AG04449 (cell line): ENCODE measurements at regions of chr4 and their contacts with region 1.

Region 1: DNA sequence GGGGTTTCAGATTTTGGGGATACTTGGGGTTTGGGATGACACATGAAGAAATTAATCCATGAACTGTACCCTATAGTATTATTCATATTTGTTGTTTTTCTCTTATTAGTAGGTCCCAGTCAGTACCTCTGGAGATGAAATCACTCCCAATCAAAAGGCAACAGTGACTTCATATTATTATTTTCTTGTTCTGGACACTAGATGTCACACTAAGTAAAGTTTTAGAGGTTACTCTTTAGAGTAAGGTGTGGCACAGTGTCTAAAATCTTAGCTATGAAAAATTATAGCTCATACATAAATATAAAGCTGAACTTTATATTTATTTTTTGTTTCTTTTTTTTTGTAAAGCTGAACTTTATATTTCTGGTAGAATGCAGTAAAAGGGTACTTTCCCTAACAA is 35.1 kb downstream of the FAM114A1 start:
- DNase-seq: no peak
- H3K4me3 ChIP-seq: no peak overlapping the region
- CTCF ChIP-seq: no peak

Region 2: GRCh38 chr4:38775326-38775725 is 127.4 kb before region 1 on chr4:
- CTCF ChIA-PET with region 1: no interaction called
- POLR2A ChIA-PET with region 1: no interaction called
- DNase-seq: no peak
- H3K4me3 ChIP-seq: no peak overlapping the region
- CTCF ChIP-seq: no peak

Region 3: GRCh38 chr4:38914854-38915253 is 12.2 kb after region 1 on chr4:
- CTCF ChIA-PET with region 1: interaction called, 34 read pairs
- POLR2A ChIA-PET with region 1: no interaction called
- DNase-seq: no peak
- H3K4me3 ChIP-seq: no peak overlapping the region
- CTCF ChIP-seq: no peak

Region 4: DNA sequence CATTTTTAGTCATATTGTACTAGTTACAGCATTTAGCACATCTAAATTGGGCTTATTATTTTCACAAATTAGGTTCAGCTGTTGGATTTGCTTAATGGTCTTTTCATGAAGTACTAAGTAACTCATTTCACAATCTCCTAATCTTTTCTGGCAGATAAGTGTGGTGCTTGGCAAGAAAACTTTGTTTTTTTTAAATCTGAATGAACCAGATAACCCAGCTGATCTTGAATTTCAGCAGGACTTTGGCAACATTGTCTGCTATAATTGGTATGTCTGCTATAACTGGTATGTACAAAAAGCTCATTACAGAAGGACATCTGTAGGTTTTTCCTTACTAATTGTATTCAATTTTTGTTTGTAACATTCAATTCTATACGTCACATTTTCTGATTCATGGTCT is 302.3 kb after region 1 on chr4:
- CTCF ChIA-PET with region 1: no interaction called
- POLR2A ChIA-PET with region 1: no interaction called
- DNase-seq: peak; percentile 4
- H3K4me3 ChIP-seq: no peak overlapping the region
- CTCF ChIP-seq: no peak